A549 (cell line): ENCODE measurements at regions of chr2 and their contacts with region 1.

Region 1: DNA sequence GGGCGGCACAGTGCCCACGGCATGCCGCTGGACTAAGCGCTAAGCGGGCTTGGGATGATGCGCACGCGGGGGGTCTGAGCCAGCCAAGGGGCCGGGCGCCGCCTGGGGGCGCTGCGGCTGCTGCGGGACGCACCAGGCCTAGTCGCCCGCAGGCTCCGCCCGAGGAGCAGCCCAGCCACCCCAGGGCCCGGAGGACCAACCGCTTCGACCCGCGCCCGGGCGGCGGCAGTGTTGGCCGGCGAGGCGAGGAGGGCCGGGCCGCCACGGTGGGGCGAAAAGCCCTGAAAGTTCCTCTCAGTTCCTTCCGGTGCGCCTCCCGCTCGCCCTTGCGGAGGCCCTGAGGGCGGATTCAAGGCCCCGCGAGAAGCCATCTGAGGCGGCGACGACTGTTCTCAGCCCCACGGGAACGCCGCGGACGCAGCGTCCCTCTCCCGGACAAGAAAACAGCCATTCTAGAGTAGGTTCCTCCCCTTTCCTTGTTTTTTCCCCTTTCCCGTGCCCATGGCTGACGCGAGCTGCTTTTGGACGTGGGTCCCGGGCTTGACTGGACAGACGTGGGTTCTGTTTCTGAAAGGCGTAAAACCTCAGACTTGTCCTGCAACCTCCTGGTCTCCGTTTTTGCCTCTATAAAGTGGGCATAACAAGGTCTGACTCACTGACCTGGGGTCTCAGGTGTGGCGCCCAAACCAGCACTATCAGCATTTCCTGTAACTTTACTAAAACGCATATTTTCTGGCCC is at the start of gene ANKAR:
- DNase-seq: peak; percentile 73 to 92
- ATAC-seq: peak; percentile 99 to 100
- H3K4me3 ChIP-seq: peak within 1 kb of the TSS; percentile 53
- H3K27ac ChIP-seq: peak within 1 kb of the TSS; percentile 82 to 92
- H3K4me1 ChIP-seq: peaks cover 12% of the 10 kb centered on the region
- CTCF ChIP-seq: peak; percentile 95
- EP300 ChIP-seq: no peak
- POLR2A ChIP-seq: peak; percentile 78
- RAD21 ChIP-seq: peak; percentile 9 to 73; a peak in 3 of 5 replicates
- polyA plus RNA-seq, gene ANKAR: 3.1 and 4.8 TPM in 2 replicates

Region 2: DNA sequence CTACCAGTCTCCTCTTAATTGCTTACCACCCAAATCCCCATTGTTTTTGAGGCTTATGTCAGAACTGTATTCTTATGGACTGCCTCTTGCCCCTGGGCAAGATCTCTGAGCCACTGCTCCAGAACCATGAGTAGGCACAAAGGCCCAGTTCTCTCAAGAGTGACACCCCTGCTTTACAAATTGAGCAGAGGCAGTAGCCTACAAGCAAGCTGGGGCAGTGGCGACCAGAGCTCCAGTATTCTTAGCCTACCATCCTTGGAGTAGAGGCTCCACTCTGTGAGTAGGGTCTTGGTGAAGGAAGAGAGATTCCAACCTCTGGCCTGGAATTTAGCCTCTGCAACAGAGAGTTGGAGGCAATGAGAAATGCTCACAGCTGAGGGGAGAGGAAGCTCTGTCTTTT is 196.8 kb before region 1 on chr2:
- CTCF ChIA-PET with region 1: no interaction called
- POLR2A ChIA-PET with region 1: no interaction called
- DNase-seq: no peak
- ATAC-seq: peak; percentile 15 to 32; a peak in 3 of 6 replicates
- H3K4me3 ChIP-seq: no peak overlapping the region
- H3K27ac ChIP-seq: no peak overlapping the region
- H3K4me1 ChIP-seq: no peaks in the 10 kb centered on the region
- CTCF ChIP-seq: no peak
- EP300 ChIP-seq: no peak
- POLR2A ChIP-seq: no peak
- RAD21 ChIP-seq: no peak

Region 3: GRCh38 chr2:189633392-189633811 is 41.1 kb before region 1 on chr2:
- CTCF ChIA-PET with region 1: no interaction called
- POLR2A ChIA-PET with region 1: no interaction called
- DNase-seq: no peak
- ATAC-seq: peak in 1 of 2 experiments; percentile 70; a peak in 3 of 6 replicates
- H3K4me3 ChIP-seq: no peak overlapping the region
- H3K27ac ChIP-seq: no peak overlapping the region
- H3K4me1 ChIP-seq: peaks cover 16% of the 10 kb centered on the region; the same call in 2 of the 3 replicates
- CTCF ChIP-seq: peak; percentile 44
- EP300 ChIP-seq: no peak
- POLR2A ChIP-seq: no peak
- RAD21 ChIP-seq: peak; percentile 45 to 61

Region 4: DNA sequence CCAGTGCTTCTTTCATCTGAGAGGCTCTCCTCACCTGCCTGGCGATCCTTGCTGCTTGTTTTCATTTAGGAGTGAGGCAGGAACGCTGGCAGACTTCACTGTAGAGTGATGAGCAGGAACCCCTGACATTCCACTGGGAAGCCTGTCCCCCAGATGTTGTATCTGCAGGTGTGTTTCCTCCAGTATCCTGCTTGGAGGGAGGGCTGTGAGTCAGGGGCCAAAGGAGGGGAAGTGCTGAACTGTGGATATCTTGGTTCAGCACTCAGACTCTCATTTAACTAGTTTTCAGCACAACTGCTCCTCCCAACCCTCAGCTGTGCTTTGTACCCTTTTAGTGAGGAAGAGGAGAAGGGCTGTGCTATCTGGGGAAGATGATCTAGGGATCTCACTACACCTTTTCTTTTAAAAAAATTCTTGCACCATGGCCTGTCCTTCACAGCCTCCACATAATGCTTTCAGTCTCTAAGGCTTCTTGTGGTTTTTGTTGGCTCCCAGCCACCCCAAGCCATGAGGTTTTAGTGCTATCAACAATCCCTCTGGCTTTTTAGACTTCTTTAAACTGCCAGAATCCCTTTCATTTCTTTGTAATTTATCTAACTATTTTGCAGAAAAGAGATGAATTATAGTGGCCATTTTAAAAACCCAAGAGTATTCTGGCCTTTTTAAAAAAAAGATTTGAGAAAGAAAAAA is 11.1 kb after region 1 on chr2:
- CTCF ChIA-PET with region 1: interaction called, 14 read pairs
- POLR2A ChIA-PET with region 1: no interaction called
- DNase-seq: no peak
- ATAC-seq: no peak
- H3K4me3 ChIP-seq: no peak overlapping the region
- H3K27ac ChIP-seq: no peak overlapping the region
- H3K4me1 ChIP-seq: no peaks in the 10 kb centered on the region
- CTCF ChIP-seq: no peak
- EP300 ChIP-seq: no peak
- POLR2A ChIP-seq: no peak
- RAD21 ChIP-seq: no peak

Region 5: DNA sequence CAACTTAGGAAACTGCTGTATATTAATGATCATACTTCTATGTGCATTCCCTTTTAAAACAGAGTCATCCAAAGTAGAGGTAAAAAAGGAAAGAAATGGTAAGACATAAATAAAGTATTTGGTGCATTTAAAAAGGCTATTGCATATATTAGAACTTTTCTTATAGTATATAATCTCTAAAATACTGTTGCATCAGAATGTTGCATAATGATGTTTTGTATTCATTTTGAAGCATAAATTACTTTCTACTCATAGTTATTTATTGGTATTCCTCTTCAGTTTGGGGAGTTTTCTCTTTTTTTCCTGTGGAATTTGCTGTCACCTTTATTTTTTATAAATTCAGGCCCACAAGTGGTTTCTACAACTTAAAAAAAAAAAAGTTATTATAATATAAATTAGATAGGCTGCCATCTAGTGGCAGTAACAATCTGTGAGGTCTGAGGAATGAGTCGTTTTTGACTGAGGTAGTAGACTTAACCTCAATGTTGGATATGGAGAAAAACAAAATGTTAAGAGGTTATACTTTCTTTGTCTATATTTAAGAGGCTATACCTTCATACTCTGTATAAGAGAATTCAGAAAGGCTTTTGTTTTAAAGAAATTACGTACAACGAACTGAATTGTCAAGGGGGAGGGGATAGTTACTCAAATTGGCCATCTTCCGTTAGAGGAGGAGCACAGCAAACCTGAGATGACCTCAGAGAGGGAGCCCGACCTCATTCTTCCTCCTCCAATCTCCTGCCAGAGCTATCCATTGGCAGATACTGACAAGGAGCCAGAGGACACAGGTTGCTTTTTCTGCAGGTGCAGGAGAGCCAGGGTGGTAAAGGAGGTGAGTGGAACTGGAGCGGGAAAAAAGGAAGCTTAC is 23.7 kb after region 1 on chr2:
- CTCF ChIA-PET with region 1: interaction called, 13 read pairs
- POLR2A ChIA-PET with region 1: no interaction called
- DNase-seq: peak; percentile 10 to 47
- ATAC-seq: peak; percentile 77 to 80; a peak in 5 of 6 replicates
- H3K4me3 ChIP-seq: no peak overlapping the region
- H3K27ac ChIP-seq: no peak overlapping the region
- H3K4me1 ChIP-seq: no peaks in the 10 kb centered on the region
- CTCF ChIP-seq: peak; percentile 80
- EP300 ChIP-seq: no peak
- POLR2A ChIP-seq: no peak
- RAD21 ChIP-seq: peak; percentile 24 to 35; a peak in 3 of 5 replicates